IMR-90 (cell line): ENCODE measurements at regions of chr3 and their contacts with region 1.

Region 1: DNA sequence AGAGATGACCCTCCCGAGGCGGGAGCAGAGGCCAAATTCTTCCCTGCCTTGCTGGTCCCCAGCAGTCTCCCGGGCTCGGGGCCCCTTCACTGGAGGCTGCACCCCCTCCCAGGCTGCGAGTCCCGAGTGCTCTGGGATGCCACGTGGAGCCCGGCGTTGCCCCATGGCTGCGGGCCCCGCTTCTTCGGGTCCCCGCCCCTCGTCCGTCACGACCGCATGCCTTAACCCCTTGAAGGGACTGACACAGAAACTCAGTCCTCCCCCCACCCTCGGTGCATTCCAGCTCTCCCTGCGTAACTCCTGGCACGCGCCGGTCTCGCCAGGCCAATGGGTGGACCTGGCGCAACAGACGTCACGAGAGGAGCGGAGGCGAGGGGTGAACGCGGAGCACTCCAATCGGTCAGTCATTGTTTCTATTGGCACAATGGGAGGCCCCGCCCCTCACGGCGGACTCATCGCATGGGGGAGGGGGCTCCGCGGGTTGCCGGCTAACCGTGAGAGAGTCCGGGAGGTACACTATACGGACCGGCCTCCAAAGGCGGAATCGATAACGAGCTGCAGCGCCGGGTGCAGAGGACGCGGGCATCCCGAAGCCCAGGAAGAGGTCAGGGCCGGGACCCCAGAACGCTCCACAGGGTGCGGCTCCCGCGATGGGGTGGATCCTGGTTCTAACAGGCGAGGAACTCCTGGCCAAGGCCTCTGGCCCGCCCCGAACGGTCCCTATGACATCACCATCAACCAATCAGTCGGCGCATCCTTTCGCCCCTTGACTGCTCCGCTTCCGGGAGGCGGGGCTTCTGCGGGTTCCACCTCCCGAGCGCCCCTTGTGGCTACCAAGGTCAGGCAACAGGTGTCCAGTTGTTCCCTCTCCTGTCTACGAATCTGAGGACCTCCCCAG is 978 bp upstream of the CELSR3 start:
- DNase-seq: peak; percentile 99
- ATAC-seq: peak; percentile 82
- H3K4me3 ChIP-seq: peak overlapping the region; percentile 56
- H3K27ac ChIP-seq: peak overlapping the region; percentile 92
- H3K4me1 ChIP-seq: no peaks in the 10 kb centered on the region; the same call in 1 of the 2 replicates
- H3K27me3 ChIP-seq: no peaks in the 10 kb centered on the region
- CTCF ChIP-seq: peak; percentile 75
- POLR2A ChIP-seq: peak; percentile 77
- RAD21 ChIP-seq: peak; percentile 15; the same call in 1 of the 2 replicates

Region 2: DNA sequence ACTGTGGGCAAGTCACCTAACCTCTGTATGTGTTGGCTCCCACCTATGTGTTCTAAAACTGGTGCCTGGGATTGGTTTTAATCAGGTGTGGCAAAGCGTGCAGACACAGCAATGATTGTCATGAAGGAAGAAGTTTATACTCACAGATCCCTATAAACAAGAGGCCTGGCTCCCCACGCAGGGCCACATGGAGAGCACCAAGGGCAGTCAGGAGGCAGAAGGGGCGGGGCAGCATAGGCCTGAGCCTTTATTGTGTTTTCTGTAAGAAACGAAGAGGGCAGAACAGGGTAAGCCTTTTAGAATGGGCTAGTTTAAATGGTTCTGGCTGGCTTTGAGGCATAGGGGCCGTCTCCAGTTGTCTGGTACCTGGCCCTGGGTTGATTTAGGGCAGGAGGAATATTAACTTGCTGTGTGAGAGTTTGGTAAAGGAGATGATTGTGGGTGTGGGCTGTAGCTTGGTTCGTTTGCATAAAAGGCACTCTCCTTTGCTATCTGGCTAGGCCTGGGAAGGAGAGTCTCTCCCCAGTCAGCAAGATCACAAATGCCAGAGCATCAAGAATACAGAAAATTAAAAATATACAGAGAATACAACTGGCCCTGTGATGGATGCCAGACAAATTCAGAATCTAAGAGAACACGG is 293.9 kb before region 1 on chr3:
- CTCF ChIA-PET with region 1: no interaction called
- POLR2A ChIA-PET with region 1: no interaction called
- dilution Hi-C with region 1: no loop called
- in situ Hi-C with region 1: no loop called
- intact Hi-C with region 1: no loop called
- DNase-seq: no peak
- ATAC-seq: peak; percentile 32; the same call in 1 of the 2 replicates
- H3K4me3 ChIP-seq: no peak overlapping the region
- H3K27ac ChIP-seq: no peak overlapping the region
- H3K4me1 ChIP-seq: no peaks in the 10 kb centered on the region
- H3K27me3 ChIP-seq: peaks cover 26% of the 10 kb centered on the region
- CTCF ChIP-seq: no peak
- POLR2A ChIP-seq: no peak
- RAD21 ChIP-seq: no peak

Region 3: DNA sequence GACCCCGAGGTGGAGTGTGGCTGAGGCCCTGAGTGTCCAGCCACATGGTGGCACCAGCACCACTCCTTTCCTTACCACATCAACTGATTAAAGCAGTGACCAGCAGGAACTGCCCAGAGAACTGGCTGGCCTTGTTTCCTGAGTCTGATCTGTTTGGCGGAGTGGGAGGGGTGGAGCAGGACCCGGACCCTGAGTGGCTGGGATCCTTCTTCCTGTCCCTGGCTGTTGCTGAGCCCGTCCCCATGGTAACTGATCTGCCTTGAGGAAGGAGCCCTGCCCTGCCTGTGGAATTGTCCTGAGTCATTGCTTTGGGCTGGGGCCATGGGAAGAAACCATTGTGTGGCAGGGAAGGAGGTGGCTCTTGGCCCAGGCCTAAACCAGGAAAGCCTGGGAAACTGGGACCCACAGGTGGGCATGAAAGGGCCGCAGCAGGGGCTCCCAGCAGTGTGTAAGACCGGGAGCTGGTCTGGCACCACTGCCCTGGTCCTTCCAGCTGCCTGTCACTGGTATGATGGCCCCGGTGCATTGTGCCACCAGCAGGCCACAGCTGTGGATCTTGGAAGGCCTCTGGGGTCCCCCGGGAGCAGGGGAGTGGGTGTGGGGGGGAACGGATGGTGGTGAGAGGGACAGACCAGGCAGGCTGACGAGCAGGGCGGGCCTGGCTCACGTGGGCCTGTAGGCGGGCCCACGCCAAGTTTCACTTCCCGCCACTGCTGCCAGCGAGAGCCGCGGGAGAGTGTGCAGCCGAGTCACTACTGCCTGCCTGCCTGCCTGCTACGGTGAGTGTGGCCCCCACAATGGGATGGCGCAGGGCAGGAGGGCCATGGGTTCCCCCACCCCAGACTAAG is 197.9 kb before region 1 on chr3:
- CTCF ChIA-PET with region 1: no interaction called
- POLR2A ChIA-PET with region 1: no interaction called
- dilution Hi-C with region 1: no loop called
- in situ Hi-C with region 1: loop called (anchors 10 kb)
- intact Hi-C with region 1: no loop called
- DNase-seq: peak; percentile 100
- ATAC-seq: peak; percentile 92
- H3K4me3 ChIP-seq: peak overlapping the region; percentile 52
- H3K27ac ChIP-seq: peak overlapping the region; percentile 92
- H3K4me1 ChIP-seq: peaks cover 19% of the 10 kb centered on the region
- H3K27me3 ChIP-seq: no peaks in the 10 kb centered on the region
- CTCF ChIP-seq: peak; percentile 85
- POLR2A ChIP-seq: peak; percentile 65
- RAD21 ChIP-seq: peak; percentile 86

Region 4: GRCh38 chr3:48598323-48599076 is 65.2 kb before region 1 on chr3:
- CTCF ChIA-PET with region 1: interaction called, 3 read pairs
- POLR2A ChIA-PET with region 1: interaction called, 18 read pairs
- dilution Hi-C with region 1: no loop called
- in situ Hi-C with region 1: no loop called
- intact Hi-C with region 1: no loop called
- DNase-seq: peak; percentile 94
- ATAC-seq: peak; percentile 70
- H3K4me3 ChIP-seq: no peak overlapping the region
- H3K27ac ChIP-seq: peak overlapping the region; percentile 94
- H3K4me1 ChIP-seq: peaks cover 54% of the 10 kb centered on the region
- H3K27me3 ChIP-seq: no peaks in the 10 kb centered on the region
- CTCF ChIP-seq: no peak; the same call in 1 of the 2 replicates
- POLR2A ChIP-seq: no peak
- RAD21 ChIP-seq: no peak; the same call in 1 of the 2 replicates

Region 5: GRCh38 chr3:48679411-48680391 is 16.0 kb after region 1 on chr3:
- CTCF ChIA-PET with region 1: no interaction called
- POLR2A ChIA-PET with region 1: no interaction called
- dilution Hi-C with region 1: no loop called
- in situ Hi-C with region 1: no loop called
- intact Hi-C with region 1: loop called (anchors 2 kb)
- DNase-seq: no peak
- ATAC-seq: no peak
- H3K4me3 ChIP-seq: no peak overlapping the region
- H3K27ac ChIP-seq: peak overlapping the region; percentile 13; the same call in 1 of the 2 replicates
- H3K4me1 ChIP-seq: peaks cover 31% of the 10 kb centered on the region
- H3K27me3 ChIP-seq: no peaks in the 10 kb centered on the region
- CTCF ChIP-seq: no peak
- POLR2A ChIP-seq: no peak
- RAD21 ChIP-seq: no peak

Region 6: DNA sequence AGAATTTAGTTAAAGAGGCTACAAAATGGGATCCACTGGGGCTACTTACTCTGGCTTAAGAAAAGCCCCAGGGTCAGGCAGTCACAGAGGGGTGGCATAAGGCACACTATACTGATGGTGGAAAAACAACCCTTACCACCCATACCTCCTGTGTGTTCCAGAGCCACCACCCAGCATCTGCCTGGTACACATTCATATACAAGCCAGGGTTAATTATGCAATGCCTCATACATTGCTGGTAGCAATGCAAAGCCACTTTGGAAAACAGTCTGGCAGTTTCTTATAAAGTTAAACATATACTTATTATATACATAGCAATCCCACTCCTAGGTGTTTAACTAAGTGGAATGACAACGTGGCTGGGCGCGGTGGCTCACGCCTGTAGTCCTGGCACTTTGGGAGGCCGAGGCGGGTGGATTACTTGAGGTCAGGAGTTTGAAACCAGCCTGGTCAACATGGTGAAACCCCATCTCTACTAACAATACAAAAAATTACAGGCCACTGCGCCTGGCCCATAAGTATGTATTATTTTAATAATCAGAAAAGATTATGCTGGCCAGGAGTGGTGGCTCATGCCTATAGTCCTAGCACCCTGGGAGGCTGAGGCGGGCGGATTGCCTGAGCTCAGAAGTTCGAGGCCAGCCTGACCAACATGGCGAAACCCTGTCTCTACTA is 37.2 kb after region 1 on chr3:
- CTCF ChIA-PET with region 1: no interaction called
- POLR2A ChIA-PET with region 1: interaction called, 15 read pairs
- dilution Hi-C with region 1: no loop called
- in situ Hi-C with region 1: no loop called
- intact Hi-C with region 1: no loop called
- DNase-seq: no peak
- ATAC-seq: peak; percentile 36
- H3K4me3 ChIP-seq: no peak overlapping the region
- H3K27ac ChIP-seq: no peak overlapping the region; the same call in 1 of the 2 replicates
- H3K4me1 ChIP-seq: peaks cover 8% of the 10 kb centered on the region
- H3K27me3 ChIP-seq: no peaks in the 10 kb centered on the region
- CTCF ChIP-seq: no peak
- POLR2A ChIP-seq: no peak
- RAD21 ChIP-seq: no peak

Region 7: GRCh38 chr3:48739955-48740823 is 76.5 kb after region 1 on chr3:
- CTCF ChIA-PET with region 1: no interaction called
- POLR2A ChIA-PET with region 1: no interaction called
- dilution Hi-C with region 1: no loop called
- in situ Hi-C with region 1: no loop called
- intact Hi-C with region 1: loop called (anchors 1 kb)
- DNase-seq: peak; percentile 75
- ATAC-seq: peak; percentile 99
- H3K4me3 ChIP-seq: no peak overlapping the region
- H3K27ac ChIP-seq: no peak overlapping the region
- H3K4me1 ChIP-seq: peaks cover 13% of the 10 kb centered on the region; the same call in 1 of the 2 replicates
- H3K27me3 ChIP-seq: no peaks in the 10 kb centered on the region
- CTCF ChIP-seq: peak; percentile 85
- POLR2A ChIP-seq: no peak
- RAD21 ChIP-seq: peak; percentile 68

Region 8: GRCh38 chr3:48877671-48878070 is 214.0 kb after region 1 on chr3:
- CTCF ChIA-PET with region 1: no interaction called
- POLR2A ChIA-PET with region 1: no interaction called
- dilution Hi-C with region 1: no loop called
- in situ Hi-C with region 1: no loop called
- intact Hi-C with region 1: no loop called
- DNase-seq: peak; percentile 36
- ATAC-seq: no peak
- H3K4me3 ChIP-seq: no peak overlapping the region
- H3K27ac ChIP-seq: no peak overlapping the region
- H3K4me1 ChIP-seq: no peaks in the 10 kb centered on the region
- H3K27me3 ChIP-seq: no peaks in the 10 kb centered on the region
- CTCF ChIP-seq: no peak
- POLR2A ChIP-seq: no peak
- RAD21 ChIP-seq: no peak